ENCODE measurements at regions of chr2 and their contacts with region 1.

Region 1: DNA sequence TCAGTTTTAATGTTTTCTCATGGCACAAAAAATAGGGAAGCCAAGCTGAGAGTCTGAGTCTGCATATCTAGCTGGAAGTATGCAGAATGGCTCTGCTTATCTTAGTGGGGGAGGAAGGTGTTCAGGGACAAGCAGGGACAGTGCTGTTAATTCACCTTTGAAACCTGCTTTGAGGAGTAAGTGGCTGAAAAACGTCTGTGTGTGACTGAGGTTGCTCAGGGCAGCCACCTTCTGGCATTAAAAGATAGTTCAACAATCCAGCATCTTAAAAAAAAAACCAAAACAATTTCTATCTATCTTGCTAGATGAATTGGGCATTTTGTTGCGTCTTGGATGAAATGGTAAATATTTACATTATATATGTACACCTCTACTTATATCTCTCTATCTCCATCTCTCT is 2.0 kb upstream of the TRPM8 start:
- DNase-seq: no peak
- CTCF ChIP-seq: peak; percentile 18

Region 2: DNA sequence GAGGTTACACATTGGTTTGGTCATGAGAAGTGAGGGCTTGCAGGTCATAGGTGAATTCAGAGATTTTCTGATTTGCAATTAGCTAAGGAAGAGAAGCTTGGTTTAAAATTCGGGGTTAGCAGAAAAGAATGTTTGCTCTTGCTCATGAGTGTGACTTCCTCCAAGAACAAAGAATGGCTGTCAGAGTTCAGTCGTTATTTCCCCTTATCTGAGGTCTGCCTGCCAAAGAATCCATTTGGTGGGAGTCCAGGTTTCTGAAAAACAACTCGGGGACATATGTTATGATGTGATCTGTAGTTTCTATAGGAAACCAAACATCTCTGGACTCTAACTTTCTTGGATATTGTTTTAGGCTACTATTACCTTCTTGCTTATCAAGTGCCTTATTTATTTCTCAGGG is 225.6 kb before region 1 on chr2:
- CTCF ChIA-PET with region 1: no interaction called
- POLR2A ChIA-PET with region 1: no interaction called
- DNase-seq: no peak
- CTCF ChIP-seq: no peak

Region 3: GRCh38 chr2:233700028-233700635 is 215.0 kb before region 1 on chr2:
- CTCF ChIA-PET with region 1: no interaction called
- POLR2A ChIA-PET with region 1: no interaction called
- DNase-seq: no peak
- CTCF ChIP-seq: no peak

Region 4: GRCh38 chr2:233928594-233929351 is 13.6 kb after region 1 on chr2:
- CTCF ChIA-PET with region 1: interaction called, 11 read pairs
- POLR2A ChIA-PET with region 1: no interaction called
- DNase-seq: no peak
- CTCF ChIP-seq: peak; percentile 13

Region 5: DNA sequence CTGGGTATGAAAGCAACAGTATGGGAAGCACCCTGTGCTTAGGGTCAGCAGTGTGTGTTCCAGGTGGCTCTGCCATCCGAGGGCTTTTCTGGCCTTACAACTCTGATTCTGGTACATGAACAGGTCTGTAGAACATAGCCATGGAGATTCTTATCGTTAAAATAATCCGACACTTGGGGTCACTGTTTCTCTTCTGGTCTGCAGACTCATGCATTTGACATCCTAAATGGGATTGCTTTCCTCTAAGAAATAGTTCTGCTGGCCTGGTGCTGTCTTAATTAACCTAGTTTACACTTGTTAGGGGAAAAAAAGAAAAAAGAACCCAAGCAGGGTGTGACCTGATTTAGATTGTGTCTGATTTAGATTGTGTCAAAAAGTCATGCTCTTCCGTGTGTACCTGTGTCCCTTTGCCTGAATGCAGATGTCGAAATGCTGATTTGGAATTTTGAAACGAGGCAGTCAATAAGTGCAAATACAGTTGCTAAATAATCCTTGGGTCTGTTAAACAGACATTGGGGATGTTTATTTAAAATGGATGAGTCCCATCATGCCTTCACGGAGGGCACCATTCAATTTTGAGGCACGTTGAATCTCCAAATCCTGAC is 61.7 kb after region 1 on chr2:
- CTCF ChIA-PET with region 1: no interaction called
- POLR2A ChIA-PET with region 1: no interaction called
- DNase-seq: peak; percentile 32
- CTCF ChIP-seq: no peak

Measured in GM10248 (cell line).